H1 (cell line): ENCODE measurements at regions of chr3 and their contacts with region 1.

Region 1: DNA sequence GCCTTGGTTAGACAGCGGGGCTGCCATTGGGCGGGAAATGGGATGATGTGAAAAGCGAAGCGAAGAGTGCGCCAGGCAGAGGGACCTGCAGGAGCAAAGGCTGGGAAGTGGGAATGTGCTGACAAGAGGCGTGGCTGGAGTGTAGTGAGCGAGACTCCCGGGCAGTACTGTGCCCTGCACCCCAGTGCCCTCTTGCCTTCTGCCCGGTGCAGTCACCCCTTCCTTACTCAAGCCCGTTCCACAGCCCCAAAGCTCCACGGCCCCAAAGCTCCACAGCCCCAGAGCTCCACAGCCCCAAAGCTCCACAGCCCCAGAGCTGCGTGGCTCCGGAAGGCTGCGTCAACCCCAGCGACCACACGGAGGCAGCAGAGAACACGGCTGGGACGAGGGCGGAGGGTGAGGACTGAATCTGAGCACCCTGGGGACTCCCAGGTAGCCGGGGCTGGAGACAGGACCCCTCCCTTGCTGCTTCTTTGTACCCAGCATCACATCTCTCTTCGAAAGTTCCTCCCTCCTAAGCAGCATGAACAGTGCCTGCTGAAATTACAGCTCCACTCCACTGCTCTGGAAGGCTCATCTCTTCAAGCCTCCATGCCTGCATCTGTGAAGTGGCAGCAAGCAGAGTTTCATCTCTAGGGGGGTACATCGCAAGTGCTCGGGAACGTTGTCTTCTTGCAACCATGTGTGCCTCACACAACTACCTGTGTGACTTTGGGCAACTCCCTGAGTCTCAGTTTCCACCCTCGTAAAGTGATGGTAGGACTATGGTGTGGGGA is 108.9 kb downstream of the FBLN2 start:
- DNase-seq: peak in 1 of 2 experiments; percentile 86
- H3K4me3 ChIP-seq: no peak overlapping the region; a peak in 1 of 8 replicates
- H3K27ac ChIP-seq: no peak overlapping the region
- H3K4me1 ChIP-seq: peaks cover 0 to 8% (median 6%) of the 10 kb centered on the region in 4 experiments; a peak in 5 of 7 replicates
- H3K27me3 ChIP-seq: peaks cover 1 to 31% (median 27%) of the 10 kb centered on the region in 4 experiments
- CTCF ChIP-seq: peak in 2 of 3 experiments; percentile 95 to 97; a peak in 3 of 4 replicates
- EP300 ChIP-seq: no peak
- POLR2A ChIP-seq: no peak
- RAD21 ChIP-seq: peak; percentile 95 to 96

Region 2: GRCh38 chr3:13638927-13639326 is 18.9 kb before region 1 on chr3:
- CTCF ChIA-PET with region 1: interaction called, 165 read pairs
- POLR2A ChIA-PET with region 1: no interaction called
- DNase-seq: no peak
- H3K4me3 ChIP-seq: no peak overlapping the region
- H3K27ac ChIP-seq: no peak overlapping the region
- H3K4me1 ChIP-seq: no peaks in the 10 kb centered on the region; a peak in 1 of 7 replicates
- H3K27me3 ChIP-seq: no peaks in the 10 kb centered on the region
- CTCF ChIP-seq: no peak
- EP300 ChIP-seq: no peak
- POLR2A ChIP-seq: no peak
- RAD21 ChIP-seq: no peak

Region 3: GRCh38 chr3:13693441-13693840 is 35.6 kb after region 1 on chr3:
- CTCF ChIA-PET with region 1: interaction called, 58 read pairs
- POLR2A ChIA-PET with region 1: interaction called, 3 read pairs
- DNase-seq: no peak
- H3K4me3 ChIP-seq: no peak overlapping the region
- H3K27ac ChIP-seq: no peak overlapping the region
- H3K4me1 ChIP-seq: peaks cover 3 to 4% (median 3%) of the 10 kb centered on the region in 4 experiments
- H3K27me3 ChIP-seq: no peaks in the 10 kb centered on the region
- CTCF ChIP-seq: no peak
- EP300 ChIP-seq: no peak
- POLR2A ChIP-seq: no peak
- RAD21 ChIP-seq: no peak

Region 4: GRCh38 chr3:13776268-13777050 is 118.6 kb after region 1 on chr3:
- CTCF ChIA-PET with region 1: interaction called, 20 read pairs
- POLR2A ChIA-PET with region 1: interaction called, 3 read pairs
- DNase-seq: no peak
- H3K4me3 ChIP-seq: no peak overlapping the region
- H3K27ac ChIP-seq: no peak overlapping the region
- H3K4me1 ChIP-seq: no peaks in the 10 kb centered on the region
- H3K27me3 ChIP-seq: no peaks in the 10 kb centered on the region
- CTCF ChIP-seq: peak in 2 of 3 experiments; percentile 43 to 61; a peak in 3 of 4 replicates
- EP300 ChIP-seq: no peak
- POLR2A ChIP-seq: no peak
- RAD21 ChIP-seq: peak; percentile 15 to 50; a peak in 2 of 4 replicates

Region 5: GRCh38 chr3:13801361-13802214 is 143.7 kb after region 1 on chr3:
- CTCF ChIA-PET with region 1: interaction called, 16 read pairs
- POLR2A ChIA-PET with region 1: no interaction called
- DNase-seq: no peak
- H3K4me3 ChIP-seq: no peak overlapping the region
- H3K27ac ChIP-seq: no peak overlapping the region
- H3K4me1 ChIP-seq: peaks cover 0 to 3% (median 0%) of the 10 kb centered on the region in 4 experiments; a peak in 2 of 7 replicates
- H3K27me3 ChIP-seq: no peaks in the 10 kb centered on the region
- CTCF ChIP-seq: no peak
- EP300 ChIP-seq: no peak
- POLR2A ChIP-seq: no peak
- RAD21 ChIP-seq: no peak

Region 6: DNA sequence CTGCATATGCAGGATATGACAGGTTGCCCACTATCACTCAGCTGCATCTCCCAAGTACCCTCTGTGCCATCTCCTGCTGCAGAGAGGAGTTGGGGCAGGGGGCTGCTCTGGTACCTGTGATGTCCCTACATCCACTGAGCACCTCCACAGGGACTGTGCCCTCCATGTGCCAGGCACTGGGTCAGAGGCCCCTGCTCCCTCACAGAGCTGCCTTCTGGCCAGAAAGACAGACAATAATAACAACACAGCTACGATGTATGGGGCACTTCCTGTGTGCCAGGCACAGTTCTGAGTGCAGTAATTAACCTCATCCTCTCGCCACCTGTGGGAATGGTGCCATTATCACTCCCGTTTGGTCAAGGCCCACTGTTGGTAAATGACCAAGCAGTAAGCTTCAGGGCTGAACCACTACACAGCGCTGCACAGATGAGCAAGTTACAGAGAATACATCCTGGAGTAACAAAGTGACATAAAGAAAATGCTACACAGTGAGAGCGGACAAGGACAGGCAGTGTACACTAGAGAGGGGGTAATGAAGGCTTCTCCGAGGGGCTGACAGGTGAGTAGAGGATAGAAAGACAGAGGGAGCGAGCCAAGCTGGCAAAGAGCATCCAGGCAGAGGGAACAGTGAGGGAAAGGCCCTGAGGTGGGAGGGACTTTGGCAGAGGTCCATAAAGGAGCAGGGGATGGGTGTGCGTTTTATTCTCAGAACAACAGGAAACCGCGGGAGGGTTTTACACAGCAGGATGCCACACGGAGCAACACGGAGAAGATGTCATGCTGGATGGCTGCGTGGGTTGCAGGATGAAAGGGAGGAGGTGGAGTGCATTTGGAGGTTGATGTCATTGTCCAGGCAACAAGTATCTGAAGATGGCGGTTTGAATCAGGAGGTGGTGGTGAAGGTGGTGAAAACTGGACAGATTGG is 208.5 kb after region 1 on chr3:
- CTCF ChIA-PET with region 1: interaction called, 10 read pairs
- POLR2A ChIA-PET with region 1: no interaction called
- DNase-seq: no peak
- H3K4me3 ChIP-seq: no peak overlapping the region
- H3K27ac ChIP-seq: no peak overlapping the region
- H3K4me1 ChIP-seq: no peaks in the 10 kb centered on the region
- H3K27me3 ChIP-seq: peaks cover 0 to 6% (median 3%) of the 10 kb centered on the region in 4 experiments; a peak in 2 of 7 replicates
- CTCF ChIP-seq: no peak
- EP300 ChIP-seq: no peak
- POLR2A ChIP-seq: no peak
- RAD21 ChIP-seq: no peak